Pancreas (tissue), 10 donors: ENCODE measurements at regions of chr7 and their contacts with region 1.

Region 1: DNA sequence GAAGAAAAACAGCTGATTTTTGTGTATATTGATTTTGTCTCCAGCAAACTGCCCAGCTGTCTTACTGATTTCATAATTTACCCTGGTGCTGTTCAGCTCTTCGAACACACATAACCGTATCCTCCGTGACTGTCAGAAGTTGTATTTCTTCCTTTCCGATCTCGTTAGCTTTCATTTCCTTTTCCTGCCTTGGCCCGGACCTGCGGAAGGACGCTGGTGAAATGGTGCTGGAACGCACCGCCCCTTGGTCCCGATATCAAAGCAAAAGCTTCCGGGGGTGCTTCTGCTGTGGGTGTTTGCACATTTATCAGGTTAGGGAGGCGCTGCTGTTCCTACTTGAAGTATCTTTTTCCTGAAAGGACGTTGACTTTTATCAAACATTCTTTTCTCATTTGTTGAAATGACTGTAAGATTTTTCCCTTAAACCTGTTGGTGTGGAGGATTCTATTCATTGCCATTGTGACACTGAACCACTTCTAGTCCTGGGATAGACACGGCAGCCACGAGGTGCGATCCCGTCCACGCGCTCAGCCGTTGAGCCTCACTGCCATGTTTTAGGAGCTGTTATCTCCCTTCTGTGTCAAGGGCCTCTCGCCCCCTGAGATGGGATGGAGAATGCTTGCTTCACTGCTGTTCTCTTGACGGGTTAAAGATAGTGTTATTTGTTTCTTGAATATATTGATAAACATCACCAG is 72.6 kb downstream of the FOXL3 start:
- DNase-seq: peak in 5 of 6 donors; percentile 1 to 45 (median 33)
- ATAC-seq: peak; percentile 33 to 81 (median 53)
- H3K4me3 ChIP-seq: peak overlapping the region in 2 of 4 donors; percentile 20 to 28
- H3K27ac ChIP-seq: peak overlapping the region in 3 of 4 donors; percentile 27 to 41 (median 29)
- H3K4me1 ChIP-seq: peaks cover 0 to 11% (median 0%) of the 10 kb centered on the region in 3 donors
- H3K27me3 ChIP-seq: no peaks in the 10 kb centered on the region
- CTCF ChIP-seq: no peak

Region 2: DNA sequence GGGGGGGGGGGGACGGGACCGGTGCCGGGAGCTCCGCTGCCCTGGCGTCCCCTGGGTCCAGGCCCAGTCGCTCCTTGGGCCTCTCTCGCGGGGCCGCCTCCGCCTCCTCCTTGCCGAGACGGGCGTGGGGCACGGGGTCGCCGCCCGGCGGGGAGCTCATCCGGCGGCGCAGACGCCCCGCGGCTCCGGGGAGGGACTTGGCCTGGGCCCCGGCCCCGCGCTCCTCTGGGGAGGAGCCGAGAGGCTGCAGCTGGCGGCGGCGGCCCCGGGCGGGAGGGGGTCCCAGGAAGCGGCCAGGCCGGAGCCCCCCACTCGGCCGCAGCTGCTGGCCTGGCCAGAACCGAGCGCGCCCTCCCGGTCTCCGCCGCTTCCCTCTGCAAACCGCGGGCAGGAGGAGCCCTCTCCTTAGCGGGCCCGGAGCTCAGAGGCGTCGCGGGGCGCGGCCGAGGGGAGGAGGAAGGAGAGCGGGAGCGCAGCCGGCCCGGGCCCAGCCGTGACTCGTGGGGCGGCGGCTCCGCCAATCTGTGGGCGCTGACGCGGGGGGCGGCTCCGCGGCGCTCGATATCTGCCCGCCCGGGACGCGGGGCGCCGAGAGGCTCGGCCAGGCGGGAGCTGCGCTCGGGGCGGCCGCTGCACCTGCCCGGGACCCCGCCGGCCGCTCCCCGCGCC is 170.4 kb before region 1 on chr7 and contains the start of gene FAM20C:
- intact Hi-C with region 1: no loop called
- DNase-seq: peak; percentile 78 to 93 (median 86)
- ATAC-seq: peak; percentile 84 to 91 (median 86)
- H3K4me3 ChIP-seq: peak within 1 kb of the TSS; percentile 49 to 77 (median 58)
- H3K27ac ChIP-seq: peak within 1 kb of the TSS; percentile 35 to 71 (median 49)
- H3K4me1 ChIP-seq: peaks cover 0 to 5% (median 0%) of the 10 kb centered on the region in 3 donors
- H3K27me3 ChIP-seq: no peaks in the 10 kb centered on the region
- CTCF ChIP-seq: no peak
- total RNA-seq, gene FAM20C: 8.9 to 43.1 (median 11.2) TPM

Region 3: DNA sequence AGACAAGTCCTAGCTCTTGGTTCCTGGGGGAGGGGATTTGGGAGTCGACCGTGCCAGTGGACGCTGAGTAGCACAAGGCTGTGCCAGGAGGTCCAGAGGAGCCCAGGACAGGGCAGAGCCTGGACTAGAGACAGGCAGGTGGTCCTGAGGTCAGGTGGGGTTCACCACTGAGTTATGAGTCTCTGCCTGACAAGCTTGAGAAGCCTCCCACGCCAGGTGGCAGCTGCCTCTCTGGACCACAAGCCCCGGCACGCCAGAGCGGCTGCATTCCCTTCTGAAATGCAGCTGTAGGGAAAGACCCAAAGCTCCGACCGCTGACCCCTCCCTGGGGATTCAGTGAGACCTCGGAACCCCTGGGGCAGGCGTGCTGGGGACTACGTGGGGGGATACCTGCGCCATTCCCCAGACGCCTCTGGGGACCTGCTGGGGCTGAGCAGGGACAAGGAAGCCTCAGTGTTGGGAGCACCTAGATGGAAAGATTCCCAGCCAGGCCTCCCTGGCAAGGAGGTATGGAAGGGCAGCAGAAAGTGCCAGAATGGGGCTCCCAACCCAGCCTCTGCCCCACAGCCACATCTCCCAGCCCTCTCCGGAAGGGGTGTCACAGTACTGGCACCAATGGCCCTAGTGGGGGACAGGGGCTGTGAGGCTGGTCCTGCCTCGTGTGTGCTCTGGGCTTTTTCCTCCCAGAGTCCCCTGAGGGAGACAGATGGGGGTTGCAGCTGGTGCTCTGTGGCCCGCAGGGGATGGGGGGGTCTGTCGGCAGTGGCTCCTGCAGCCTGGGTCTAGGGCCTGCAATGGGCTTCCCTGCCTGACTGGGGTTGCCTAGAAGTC is 128.1 kb after region 1 on chr7:
- intact Hi-C with region 1: loop called in 1 of 3 experiments (anchors 10 kb)
- DNase-seq: peak in 5 of 6 donors; percentile 2 to 65 (median 33)
- ATAC-seq: no peak
- H3K4me3 ChIP-seq: no peak overlapping the region
- H3K27ac ChIP-seq: no peak overlapping the region
- H3K4me1 ChIP-seq: peaks cover 0 to 3% (median 0%) of the 10 kb centered on the region in 3 donors
- H3K27me3 ChIP-seq: no peaks in the 10 kb centered on the region
- CTCF ChIP-seq: no peak

Region 4: GRCh38 chr7:503575-504111 is 141.1 kb after region 1 on chr7:
- intact Hi-C with region 1: loop called in 2 of 3 experiments (anchors 10 kb)
- DNase-seq: peak; percentile 85 to 98 (median 96)
- ATAC-seq: peak; percentile 71 to 87 (median 82)
- H3K4me3 ChIP-seq: peak overlapping the region in 2 of 4 donors; percentile 14 to 18
- H3K27ac ChIP-seq: peak overlapping the region; percentile 92 to 95 (median 93)
- H3K4me1 ChIP-seq: peaks cover 28 to 49% (median 40%) of the 10 kb centered on the region in 3 donors
- H3K27me3 ChIP-seq: no peaks in the 10 kb centered on the region
- CTCF ChIP-seq: no peak

Region 5: DNA sequence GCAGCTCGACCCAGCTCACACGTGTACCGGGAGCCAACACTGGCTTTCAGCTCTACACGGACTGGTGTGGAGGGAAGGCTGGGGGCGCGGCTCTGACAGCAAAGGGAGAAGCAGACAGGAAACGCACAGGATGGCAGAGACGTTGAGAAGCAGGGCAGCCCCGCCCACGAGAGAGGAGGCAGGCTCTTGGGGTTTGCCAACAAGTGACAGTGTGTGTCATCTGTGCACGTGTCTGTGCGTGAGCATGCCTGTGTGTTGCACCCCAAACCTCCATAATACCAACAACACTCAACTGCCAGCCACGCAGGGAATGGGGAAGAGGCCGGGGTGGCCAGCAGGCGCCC is 221.5 kb after region 1 on chr7:
- intact Hi-C with region 1: no loop called
- DNase-seq: peak in 1 of 6 donors; percentile 50
- ATAC-seq: peak in 1 of 4 donors; percentile 30
- H3K4me3 ChIP-seq: no peak overlapping the region
- H3K27ac ChIP-seq: no peak overlapping the region
- H3K4me1 ChIP-seq: no peaks in the 10 kb centered on the region
- H3K27me3 ChIP-seq: no peaks in the 10 kb centered on the region
- CTCF ChIP-seq: no peak